ENCODE measurements at regions of chr12 and their contacts with region 1.

Region 1: GRCh38 chr12:74317078-74317601 is 220.5 kb upstream of the ATXN7L3B start:
- DNase-seq: peak; percentile 21
- H3K4me3 ChIP-seq: no peak overlapping the region
- H3K27ac ChIP-seq: no peak overlapping the region
- H3K4me1 ChIP-seq: no peaks in the 10 kb centered on the region
- H3K27me3 ChIP-seq: peaks cover 2% of the 10 kb centered on the region
- CTCF ChIP-seq: peak; percentile 47 to 58

Region 2: GRCh38 chr12:72346363-72346944 is 1970.7 kb before region 1 on chr12:
- CTCF ChIA-PET with region 1: no interaction called
- dilution Hi-C with region 1: no loop called
- in situ Hi-C with region 1: no loop called
- intact Hi-C with region 1: loop called (anchors 5 kb)
- DNase-seq: peak; percentile 75
- H3K4me3 ChIP-seq: no peak overlapping the region
- H3K27ac ChIP-seq: no peak overlapping the region
- H3K4me1 ChIP-seq: no peaks in the 10 kb centered on the region
- H3K27me3 ChIP-seq: no peaks in the 10 kb centered on the region
- CTCF ChIP-seq: peak; percentile 50 to 71

Region 3: GRCh38 chr12:74021937-74022336 is 295.2 kb before region 1 on chr12:
- CTCF ChIA-PET with region 1: no interaction called
- dilution Hi-C with region 1: no loop called
- in situ Hi-C with region 1: no loop called
- intact Hi-C with region 1: loop called (anchors 1 kb)
- DNase-seq: peak; percentile 55
- H3K4me3 ChIP-seq: no peak overlapping the region
- H3K27ac ChIP-seq: no peak overlapping the region
- H3K4me1 ChIP-seq: no peaks in the 10 kb centered on the region
- H3K27me3 ChIP-seq: no peaks in the 10 kb centered on the region
- CTCF ChIP-seq: peak; percentile 67 to 89

Region 4: GRCh38 chr12:74370608-74371216 is 53.6 kb after region 1 on chr12:
- CTCF ChIA-PET with region 1: no interaction called
- dilution Hi-C with region 1: loop called (anchors 5 kb)
- in situ Hi-C with region 1: no loop called
- intact Hi-C with region 1: no loop called
- DNase-seq: no peak
- H3K4me3 ChIP-seq: no peak overlapping the region
- H3K27ac ChIP-seq: no peak overlapping the region
- H3K4me1 ChIP-seq: no peaks in the 10 kb centered on the region
- H3K27me3 ChIP-seq: peaks cover 5% of the 10 kb centered on the region
- CTCF ChIP-seq: no peak

Region 5: GRCh38 chr12:74646831-74647230 is 329.7 kb after region 1 on chr12:
- CTCF ChIA-PET with region 1: interaction called, 4 read pairs
- dilution Hi-C with region 1: no loop called
- in situ Hi-C with region 1: no loop called
- intact Hi-C with region 1: loop called (anchors 2 kb)
- DNase-seq: peak; percentile 30
- H3K4me3 ChIP-seq: no peak overlapping the region
- H3K27ac ChIP-seq: no peak overlapping the region
- H3K4me1 ChIP-seq: no peaks in the 10 kb centered on the region
- H3K27me3 ChIP-seq: peaks cover 2% of the 10 kb centered on the region
- CTCF ChIP-seq: peak; percentile 34 to 62

Measured in mammary epithelial cell (primary cell).